ENCODE measurements at regions of chr15 and their contacts with region 1.

Region 1: DNA sequence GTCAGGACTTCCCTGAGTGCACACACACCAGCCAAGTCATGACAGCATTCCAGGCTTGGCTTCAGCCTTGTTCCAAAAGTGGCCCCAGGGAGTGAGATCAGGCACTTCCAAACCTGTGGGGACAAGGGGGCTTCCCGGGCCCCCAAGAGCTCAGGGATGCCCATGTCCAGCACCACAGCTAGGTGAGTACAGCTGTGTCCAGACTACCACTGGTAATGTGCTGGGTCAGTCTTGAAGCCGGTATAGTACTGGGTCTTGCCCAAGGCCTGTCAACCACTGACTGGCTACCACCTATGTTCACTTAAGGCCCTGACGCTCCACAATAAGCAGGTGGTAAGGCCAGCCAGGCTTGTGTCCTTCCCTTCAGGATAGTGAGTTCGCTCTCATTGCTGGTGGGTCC is 249.3 kb downstream of the UNC13C start:
- DNase-seq: no peak
- ATAC-seq: no peak
- H3K4me3 ChIP-seq: no peak overlapping the region
- H3K4me3 Mint-ChIP-seq: no peak overlapping the region
- H3K27ac ChIP-seq: no peak overlapping the region
- H3K27ac Mint-ChIP-seq: no peak overlapping the region
- H3K4me1 ChIP-seq: no peaks in the 10 kb centered on the region
- H3K4me1 Mint-ChIP-seq: no peaks in the 10 kb centered on the region
- H3K27me3 ChIP-seq: no peaks in the 10 kb centered on the region
- H3K27me3 Mint-ChIP-seq: no peaks in the 10 kb centered on the region
- CTCF ChIP-seq: no peak

Region 2: GRCh38 chr15:54273928-54274327 is 46.4 kb after region 1 on chr15:
- CTCF ChIA-PET with region 1: no interaction called
- POLR2A ChIA-PET with region 1: no interaction called
- intact Hi-C with region 1: loop called in 1 of 2 experiments (anchors 5 kb)
- DNase-seq: no peak
- ATAC-seq: no peak
- H3K4me3 ChIP-seq: no peak overlapping the region
- H3K4me3 Mint-ChIP-seq: no peak overlapping the region
- H3K27ac ChIP-seq: no peak overlapping the region
- H3K27ac Mint-ChIP-seq: no peak overlapping the region
- H3K4me1 ChIP-seq: no peaks in the 10 kb centered on the region
- H3K4me1 Mint-ChIP-seq: no peaks in the 10 kb centered on the region
- H3K27me3 ChIP-seq: no peaks in the 10 kb centered on the region
- H3K27me3 Mint-ChIP-seq: no peaks in the 10 kb centered on the region
- CTCF ChIP-seq: no peak

Region 3: DNA sequence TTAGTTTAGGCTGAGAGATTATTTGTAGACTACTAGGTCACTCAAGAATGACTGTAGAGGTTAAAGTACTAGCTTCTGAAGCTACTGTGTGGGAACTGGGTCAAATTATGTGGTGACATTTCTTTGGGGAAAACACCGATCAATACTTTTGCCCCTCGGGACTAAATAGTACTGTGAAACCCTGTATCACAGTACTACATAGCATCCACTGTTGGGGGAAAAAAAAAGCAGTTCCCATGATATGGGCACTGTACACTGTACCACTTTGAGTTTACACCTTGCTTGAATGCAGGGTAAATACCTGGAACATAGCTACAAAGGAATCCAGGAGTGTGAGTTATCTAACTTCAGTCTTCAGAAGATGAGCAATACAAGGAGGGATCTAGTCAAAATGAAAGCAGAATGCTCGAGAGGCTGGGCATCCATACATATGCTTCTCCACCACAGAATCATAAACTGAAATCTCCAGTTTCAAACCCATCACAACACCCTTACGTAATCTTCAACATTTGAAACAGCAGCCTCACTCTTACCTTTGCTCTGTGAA is 62.1 kb after region 1 on chr15:
- CTCF ChIA-PET with region 1: no interaction called
- POLR2A ChIA-PET with region 1: no interaction called
- intact Hi-C with region 1: loop called in 1 of 2 experiments (anchors 10 kb)
- DNase-seq: no peak
- ATAC-seq: no peak
- H3K4me3 ChIP-seq: no peak overlapping the region
- H3K4me3 Mint-ChIP-seq: no peak overlapping the region
- H3K27ac ChIP-seq: no peak overlapping the region
- H3K27ac Mint-ChIP-seq: no peak overlapping the region
- H3K4me1 ChIP-seq: no peaks in the 10 kb centered on the region
- H3K4me1 Mint-ChIP-seq: no peaks in the 10 kb centered on the region
- H3K27me3 ChIP-seq: no peaks in the 10 kb centered on the region
- H3K27me3 Mint-ChIP-seq: no peaks in the 10 kb centered on the region
- CTCF ChIP-seq: no peak

Measured in CD4-positive, alpha-beta T cell (primary cell).